Left cardiac atrium (tissue), 4 donors: ENCODE measurements at regions of chr12 and their contacts with region 1.

Region 1: DNA sequence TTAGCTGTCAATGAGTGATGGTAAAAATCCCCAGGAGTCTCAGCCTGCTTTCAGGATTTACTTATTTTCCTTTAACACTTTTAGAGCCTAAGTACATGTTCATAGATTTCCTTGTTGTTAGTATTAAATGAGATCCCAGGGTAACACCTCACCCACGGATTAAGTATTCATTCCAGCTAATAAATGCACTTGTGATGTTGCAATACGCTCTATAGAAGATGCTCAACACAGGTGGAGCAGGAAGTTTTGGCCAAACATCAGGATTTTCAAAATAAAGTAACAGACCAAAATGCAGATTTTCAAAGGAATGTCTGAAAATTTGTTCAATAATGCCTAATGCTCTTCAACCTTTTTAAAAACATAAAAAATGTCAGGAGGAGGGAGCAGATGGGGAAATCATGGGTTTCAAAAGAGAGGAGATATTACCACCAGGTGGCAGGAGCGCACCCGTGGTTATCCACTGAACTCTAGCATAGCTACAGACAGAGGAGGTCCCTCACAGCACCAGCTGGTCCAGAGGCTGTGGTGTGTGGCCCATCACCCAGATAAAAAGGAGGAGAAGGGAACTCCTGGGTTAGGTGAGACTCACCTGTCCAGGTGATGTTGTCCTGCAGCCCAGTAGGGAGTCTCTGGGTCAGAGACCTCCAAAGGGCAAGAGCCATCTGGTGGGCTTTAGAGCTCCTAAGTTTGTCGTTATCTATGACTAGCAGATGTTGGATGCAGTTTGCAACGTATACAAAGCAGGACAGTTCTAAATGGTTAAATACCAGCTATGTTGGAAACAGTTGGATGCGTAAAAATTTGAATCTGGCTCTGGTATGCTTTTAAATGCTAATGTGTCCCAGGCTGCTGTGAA is 1158.4 kb upstream of the TMEM132C start:
- DNase-seq: peak; percentile 68
- ATAC-seq: peak; percentile 78 to 80

Region 2: DNA sequence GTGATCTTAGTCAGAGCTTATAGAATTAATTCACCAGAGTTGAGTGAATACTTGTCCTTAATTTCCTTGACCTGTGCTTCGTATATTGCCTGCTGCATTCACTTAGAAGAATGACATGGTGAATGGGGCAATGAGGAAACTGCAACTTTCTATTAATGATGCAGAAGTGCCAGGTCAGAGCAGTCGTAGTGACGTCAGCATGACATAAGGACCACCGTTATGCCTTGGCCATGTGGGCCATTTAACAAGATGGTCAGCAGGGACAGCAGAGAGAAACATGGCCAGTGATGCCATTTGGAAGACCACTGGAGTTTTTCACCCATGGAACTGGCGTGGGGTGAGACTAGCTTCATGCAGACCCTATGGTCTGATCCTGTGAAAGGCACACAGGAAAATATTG is 311.1 kb before region 1 on chr12:
- intact Hi-C with region 1: no loop called
- DNase-seq: no peak
- ATAC-seq: no peak

Region 3: GRCh38 chr12:127125607-127126259 is 17.1 kb after region 1 on chr12:
- intact Hi-C with region 1: no loop called
- DNase-seq: no peak
- ATAC-seq: peak in 1 of 2 donors; percentile 96

Region 4: DNA sequence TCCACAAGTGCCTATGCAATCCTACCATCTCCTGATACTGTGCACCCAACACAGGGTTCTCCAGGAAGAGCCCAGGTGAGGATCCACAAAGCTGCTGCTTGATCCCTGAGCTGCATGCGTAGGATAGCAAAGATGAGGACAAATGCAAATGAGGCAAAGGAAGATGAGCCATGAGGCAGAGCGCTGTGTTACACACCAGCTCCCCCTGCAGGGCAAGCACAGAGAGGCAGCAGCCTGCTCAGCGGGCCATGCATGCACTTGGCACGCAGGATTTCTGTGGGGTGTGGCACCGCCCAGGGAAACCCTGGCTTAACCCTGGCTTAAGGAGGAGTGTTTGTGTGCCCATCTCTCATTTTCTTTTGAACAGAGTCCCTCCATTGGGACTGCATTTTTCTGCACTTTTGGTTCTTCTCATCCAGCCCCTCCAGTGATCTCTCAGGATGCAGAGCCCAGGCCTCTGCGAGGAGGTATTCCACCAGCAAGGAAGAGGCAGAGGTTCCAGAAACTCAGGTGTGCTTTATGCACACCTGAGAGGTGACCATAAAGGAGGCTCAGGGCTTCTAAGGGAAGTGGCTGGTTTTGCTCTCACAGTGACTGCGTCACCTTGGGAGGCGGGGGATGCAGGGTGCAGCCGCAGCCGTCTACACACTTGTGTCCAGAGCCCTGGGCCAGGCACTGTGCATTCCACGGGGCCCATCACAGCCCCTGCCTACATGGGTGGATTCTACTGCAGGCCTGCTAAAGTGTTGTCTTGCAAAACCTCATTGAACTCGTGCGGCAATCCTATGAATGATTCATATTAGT is 185.1 kb after region 1 on chr12:
- intact Hi-C with region 1: loop called (anchors 1 to 5 kb)
- DNase-seq: peak; percentile 44
- ATAC-seq: peak; percentile 41 to 66

Region 5: GRCh38 chr12:127381048-127381668 is 272.6 kb after region 1 on chr12:
- intact Hi-C with region 1: loop called (anchors 1 to 10 kb)
- DNase-seq: peak; percentile 39
- ATAC-seq: peak; percentile 71 to 77

Region 6: DNA sequence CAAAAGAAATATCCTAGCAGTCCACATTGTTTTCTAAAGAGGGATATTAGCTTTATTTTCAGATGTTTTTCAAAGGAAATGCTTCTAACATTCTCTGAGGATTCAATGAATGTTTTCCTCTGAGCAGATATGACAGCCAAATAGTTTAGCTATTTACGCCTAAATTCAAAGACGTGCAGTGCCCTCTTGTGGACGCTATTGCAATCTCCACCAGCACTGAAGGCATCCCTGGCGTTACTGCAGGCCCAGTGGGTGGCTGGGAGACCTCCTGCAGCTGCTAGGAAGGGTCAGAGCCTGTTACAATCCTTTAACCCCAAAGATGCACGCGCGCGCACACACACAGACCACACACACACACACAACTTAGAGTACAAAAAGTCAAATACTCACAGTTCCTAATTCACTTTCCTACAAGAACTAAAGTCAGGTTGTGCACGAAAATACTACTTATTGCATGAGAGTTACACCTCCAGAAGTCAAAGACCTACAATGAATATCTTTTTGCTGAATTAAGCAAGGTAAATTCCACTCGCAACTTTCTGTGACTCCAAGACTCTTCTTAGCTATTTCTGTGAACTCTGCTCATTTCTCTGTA is 569.0 kb after region 1 on chr12:
- intact Hi-C with region 1: loop called in 1 of 2 experiments (anchors 10 kb)
- DNase-seq: peak; percentile 74
- ATAC-seq: peak; percentile 61 to 87

Region 7: GRCh38 chr12:127925971-127926370 is 817.4 kb after region 1 on chr12:
- intact Hi-C with region 1: loop called in 1 of 2 experiments (anchors 10 kb)
- DNase-seq: peak; percentile 51
- ATAC-seq: peak; percentile 84 to 91